Panc1 (cell line): ENCODE measurements at regions of chrX and their contacts with region 1.

Region 1: GRCh38 chrX:10722851-10723250 is 102.5 kb upstream of the MID1 start:
- DNase-seq: no peak
- ATAC-seq: peak; percentile 69; the same call in 1 of the 2 replicates
- H3K4me3 ChIP-seq: no peak overlapping the region
- H3K27ac ChIP-seq: no peak overlapping the region
- H3K4me1 ChIP-seq: no peaks in the 10 kb centered on the region
- H3K27me3 ChIP-seq: no peaks in the 10 kb centered on the region
- CTCF ChIP-seq: peak; percentile 76

Region 2: GRCh38 chrX:9285342-9285771 is 1437.5 kb before region 1 on chrX:
- CTCF ChIA-PET with region 1: no interaction called
- POLR2A ChIA-PET with region 1: no interaction called
- in situ Hi-C with region 1: no loop called
- intact Hi-C with region 1: loop called (anchors 10 kb)
- DNase-seq: no peak
- ATAC-seq: no peak
- H3K4me3 ChIP-seq: no peak overlapping the region
- H3K27ac ChIP-seq: no peak overlapping the region
- H3K4me1 ChIP-seq: no peaks in the 10 kb centered on the region
- H3K27me3 ChIP-seq: no peaks in the 10 kb centered on the region
- CTCF ChIP-seq: no peak

Region 3: GRCh38 chrX:10828640-10829039 is 105.8 kb after region 1 on chrX:
- CTCF ChIA-PET with region 1: no interaction called
- POLR2A ChIA-PET with region 1: no interaction called
- in situ Hi-C with region 1: no loop called
- intact Hi-C with region 1: no loop called
- DNase-seq: no peak
- ATAC-seq: no peak
- H3K4me3 ChIP-seq: no peak overlapping the region
- H3K27ac ChIP-seq: no peak overlapping the region
- H3K4me1 ChIP-seq: no peaks in the 10 kb centered on the region
- H3K27me3 ChIP-seq: no peaks in the 10 kb centered on the region
- CTCF ChIP-seq: no peak